Panc1 (cell line): ENCODE measurements at regions of chr9 and their contacts with region 1.

Region 1: DNA sequence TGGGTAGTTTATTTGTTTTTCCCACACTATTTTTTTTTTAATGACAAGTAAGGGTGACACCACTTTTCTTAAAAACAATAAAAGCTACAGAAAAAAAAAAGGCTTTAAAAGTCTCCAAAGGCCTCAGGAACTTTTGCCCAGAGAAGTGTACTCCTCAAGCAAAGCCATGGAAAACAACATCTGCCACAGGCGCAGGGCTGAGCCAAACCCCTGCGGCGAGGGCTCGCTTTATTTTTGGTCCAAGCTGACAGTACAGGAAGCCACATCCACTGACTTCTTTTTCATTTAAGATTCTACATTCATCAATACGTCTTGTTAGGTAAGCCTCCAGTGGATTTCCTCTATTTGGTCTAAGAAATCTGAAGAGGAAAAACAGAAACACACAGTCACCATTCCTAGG is 51.9 kb upstream of the IFNK start:
- DNase-seq: no peak
- ATAC-seq: no peak
- H3K4me3 ChIP-seq: no peak overlapping the region
- H3K27ac ChIP-seq: no peak overlapping the region
- H3K4me1 ChIP-seq: no peaks in the 10 kb centered on the region
- H3K27me3 ChIP-seq: no peaks in the 10 kb centered on the region
- CTCF ChIP-seq: no peak

Region 2: GRCh38 chr9:27460226-27461023 is 11.8 kb before region 1 on chr9:
- CTCF ChIA-PET with region 1: no interaction called
- POLR2A ChIA-PET with region 1: interaction called, 13 read pairs
- in situ Hi-C with region 1: no loop called
- intact Hi-C with region 1: no loop called
- DNase-seq: no peak
- ATAC-seq: no peak
- H3K4me3 ChIP-seq: no peak overlapping the region
- H3K27ac ChIP-seq: no peak overlapping the region
- H3K4me1 ChIP-seq: no peaks in the 10 kb centered on the region
- H3K27me3 ChIP-seq: no peaks in the 10 kb centered on the region
- CTCF ChIP-seq: no peak